ENCODE measurements at regions of chr17 and their contacts with region 1.

Region 1: DNA sequence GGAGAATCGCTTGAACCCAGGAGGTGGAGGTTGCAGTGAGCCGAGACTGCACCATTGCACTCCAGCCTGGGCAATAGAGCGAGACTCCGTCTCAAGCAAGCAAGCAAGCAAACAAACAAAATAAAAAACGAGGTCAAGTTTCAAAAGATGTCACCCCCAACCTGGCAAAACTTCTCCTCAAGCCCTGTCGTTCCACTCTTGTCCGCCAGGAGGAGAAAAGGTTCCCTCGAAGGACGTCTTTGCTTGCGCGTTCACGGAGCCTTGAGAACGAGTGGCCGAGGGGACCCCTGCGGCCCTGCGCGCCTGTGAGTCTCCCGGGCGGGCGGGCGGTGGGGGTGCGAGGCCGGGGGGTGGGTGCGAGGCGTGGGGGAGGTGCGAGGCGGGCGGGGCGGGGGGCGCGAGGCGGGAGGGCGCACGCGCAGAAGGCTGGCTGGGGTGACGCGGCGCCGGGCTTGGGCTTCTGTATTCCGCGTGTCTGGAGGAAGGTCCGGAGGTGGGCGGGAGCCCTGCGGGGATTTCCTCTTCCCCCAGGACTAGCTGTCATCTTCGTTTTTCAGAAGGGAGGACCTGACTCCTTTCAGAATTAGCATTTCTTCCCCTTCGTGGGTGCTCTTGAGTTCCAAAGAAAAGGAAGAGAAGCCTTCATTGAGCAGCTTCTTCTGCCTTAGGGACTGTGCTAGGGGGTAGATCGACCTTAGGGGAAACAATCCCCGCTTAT is 3.7 kb downstream of the SLC52A1 start:
- DNase-seq: peak; percentile 95
- H3K4me3 Mint-ChIP-seq: peak overlapping the region; percentile 81
- H3K27ac Mint-ChIP-seq: peak overlapping the region; percentile 92
- H3K4me1 Mint-ChIP-seq: peaks cover 22% of the 10 kb centered on the region
- H3K27me3 Mint-ChIP-seq: peaks cover 2% of the 10 kb centered on the region

Region 2: DNA sequence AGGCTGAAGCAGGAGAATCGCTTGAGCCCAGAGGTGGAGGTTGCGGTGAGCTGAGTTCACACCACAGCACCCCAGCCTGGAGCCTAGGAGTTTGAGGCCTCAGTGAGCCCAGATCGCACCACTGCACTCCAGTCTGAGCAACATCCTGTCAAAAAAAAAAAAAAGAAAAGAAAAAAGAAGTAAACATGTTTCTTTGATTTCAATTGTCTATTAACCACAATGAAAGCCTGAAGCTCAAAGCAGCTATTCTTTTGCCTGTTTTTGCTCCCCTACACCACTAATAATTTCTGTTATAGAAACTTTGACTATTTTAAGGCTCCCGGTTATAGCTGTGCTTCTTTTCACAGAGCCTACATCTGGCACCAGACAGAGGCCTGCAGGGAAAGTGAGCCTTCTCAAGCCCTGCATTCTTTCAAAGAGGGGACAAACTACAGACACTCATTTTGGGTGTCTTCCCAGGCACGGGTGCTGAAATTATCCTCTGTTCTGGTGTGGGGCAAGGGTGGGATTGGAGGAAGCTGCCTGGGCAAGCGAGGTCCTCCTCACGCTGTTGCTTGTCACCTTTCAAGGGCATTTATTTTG is 17.9 kb after region 1 on chr17:
- intact Hi-C with region 1: loop called (anchors 2 kb)
- DNase-seq: peak; percentile 86
- H3K4me3 Mint-ChIP-seq: peak overlapping the region; percentile 8
- H3K27ac Mint-ChIP-seq: peak overlapping the region; percentile 68
- H3K4me1 Mint-ChIP-seq: peaks cover 31% of the 10 kb centered on the region
- H3K27me3 Mint-ChIP-seq: no peaks in the 10 kb centered on the region